ENCODE measurements at regions of chr14 and their contacts with region 1.

Region 1: DNA sequence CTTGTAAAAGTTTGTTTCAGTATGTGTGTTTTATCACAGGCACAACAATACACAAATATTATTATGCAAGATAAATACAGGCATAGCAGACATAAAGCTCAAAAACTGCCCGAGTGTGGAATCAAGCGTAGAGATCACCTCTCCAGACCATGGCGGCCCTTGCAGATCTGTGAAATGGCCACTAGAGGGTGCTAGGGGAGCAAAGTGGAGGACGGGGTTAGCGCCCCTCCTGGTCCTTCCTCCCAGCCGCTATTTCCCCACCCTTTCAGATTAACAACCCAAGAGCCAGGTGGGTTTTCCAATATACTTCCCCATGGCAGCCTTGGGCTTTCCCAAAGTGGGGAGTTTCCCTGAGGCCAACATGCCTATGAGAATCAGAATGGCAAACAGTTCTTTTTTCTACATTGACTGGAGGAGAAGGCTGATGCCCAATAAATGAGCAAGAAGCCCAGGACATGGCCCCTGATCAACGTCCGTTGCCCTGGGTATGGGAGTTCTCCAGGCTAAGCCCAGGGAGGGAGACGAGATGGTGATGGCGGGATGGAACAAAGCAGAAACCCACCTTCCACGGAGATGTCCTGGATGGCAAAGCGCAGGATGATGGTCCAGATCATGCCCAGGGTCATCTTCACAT is 67.4 kb downstream of the ACTN1 start:
- DNase-seq: peak; percentile 25 to 54
- ATAC-seq: peak; percentile 91 to 93
- H3K4me3 ChIP-seq: no peak overlapping the region
- H3K27ac ChIP-seq: no peak overlapping the region
- H3K4me1 ChIP-seq: peaks cover 0 to 7% of the 10 kb centered on the region in 2 donors
- H3K27me3 ChIP-seq: no peaks in the 10 kb centered on the region
- CTCF ChIP-seq: peak; percentile 89 to 98 (median 94)
- POLR2A ChIP-seq: no peak

Region 2: DNA sequence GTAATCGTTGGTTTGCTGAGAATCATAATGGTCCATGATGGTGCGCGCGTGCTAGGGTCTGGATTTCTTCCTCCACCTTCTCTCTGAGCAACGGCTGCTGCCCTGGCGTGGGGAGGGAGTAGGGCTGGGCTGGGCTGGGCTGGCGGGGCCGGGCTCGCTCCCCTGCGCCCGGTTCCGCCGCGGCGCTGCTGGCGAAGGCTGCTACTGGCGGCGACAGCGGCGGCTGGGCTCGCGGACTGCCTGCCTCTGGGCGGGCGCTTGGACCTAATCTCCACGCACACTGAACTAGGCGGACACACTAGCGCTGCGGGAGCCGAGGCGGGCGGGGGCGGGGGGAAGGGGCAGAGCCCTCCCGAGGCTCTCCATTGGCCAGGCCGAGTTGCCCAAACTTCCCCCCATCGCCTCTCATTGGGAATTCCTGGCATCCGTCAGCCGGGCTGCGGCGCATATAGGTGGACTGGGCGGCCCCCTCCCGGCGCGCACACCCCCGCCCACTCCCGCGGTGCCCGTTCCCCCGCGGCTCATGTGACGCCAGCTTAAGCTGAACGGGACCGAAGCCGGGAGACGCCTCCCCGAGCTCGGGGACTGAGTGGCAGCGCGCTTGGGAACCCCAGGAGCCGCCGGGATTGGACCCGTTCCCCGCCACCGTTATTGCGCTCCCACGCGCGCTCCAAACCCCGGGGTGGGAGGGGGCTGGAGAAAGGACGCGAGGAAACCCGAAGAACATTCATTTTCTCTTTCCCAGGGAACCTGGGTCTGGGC is 67.5 kb after region 1 on chr14 and contains the start of gene ACTN1:
- in situ Hi-C with region 1: no loop called
- intact Hi-C with region 1: loop called (anchors 2 kb)
- DNase-seq: peak; percentile 85 to 91
- ATAC-seq: peak; percentile 82 to 84
- H3K4me3 ChIP-seq: peak within 1 kb of the TSS; percentile 75 to 99 (median 88)
- H3K27ac ChIP-seq: peak within 1 kb of the TSS; percentile 79 to 89 (median 80)
- H3K4me1 ChIP-seq: no peaks in the 10 kb centered on the region
- H3K27me3 ChIP-seq: no peaks in the 10 kb centered on the region
- CTCF ChIP-seq: no peak
- POLR2A ChIP-seq: peak; percentile 65 to 86
- total RNA-seq, gene ACTN1: 10.0 to 17.3 (median 14.1) TPM

Region 3: DNA sequence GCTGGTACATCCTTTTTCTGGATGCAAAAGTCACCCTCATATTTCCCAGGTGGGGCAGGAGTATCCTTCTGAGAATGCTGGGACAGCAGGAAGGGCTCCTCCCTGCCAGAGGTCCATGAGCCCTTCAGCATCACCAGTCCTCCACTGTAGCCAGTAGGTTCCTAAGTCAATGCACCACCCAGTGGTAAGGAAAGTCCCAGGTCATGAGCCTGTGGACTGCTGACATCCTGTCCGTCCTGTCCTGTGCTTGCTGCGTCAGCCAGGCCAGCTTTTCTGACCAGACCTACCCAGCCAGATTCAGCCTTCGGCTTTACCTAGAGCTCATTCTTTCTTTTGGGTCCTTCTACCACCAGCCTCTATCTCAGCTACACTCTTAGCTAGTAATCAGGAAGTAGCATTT is 90.4 kb after region 1 on chr14:
- in situ Hi-C with region 1: no loop called
- intact Hi-C with region 1: loop called (anchors 1 kb)
- DNase-seq: no peak
- ATAC-seq: peak in 1 of 2 donors; percentile 66
- H3K4me3 ChIP-seq: no peak overlapping the region
- H3K27ac ChIP-seq: no peak overlapping the region
- H3K4me1 ChIP-seq: no peaks in the 10 kb centered on the region
- H3K27me3 ChIP-seq: no peaks in the 10 kb centered on the region
- CTCF ChIP-seq: peak in 2 of 5 experiments; percentile 30 to 36
- POLR2A ChIP-seq: no peak

Region 4: DNA sequence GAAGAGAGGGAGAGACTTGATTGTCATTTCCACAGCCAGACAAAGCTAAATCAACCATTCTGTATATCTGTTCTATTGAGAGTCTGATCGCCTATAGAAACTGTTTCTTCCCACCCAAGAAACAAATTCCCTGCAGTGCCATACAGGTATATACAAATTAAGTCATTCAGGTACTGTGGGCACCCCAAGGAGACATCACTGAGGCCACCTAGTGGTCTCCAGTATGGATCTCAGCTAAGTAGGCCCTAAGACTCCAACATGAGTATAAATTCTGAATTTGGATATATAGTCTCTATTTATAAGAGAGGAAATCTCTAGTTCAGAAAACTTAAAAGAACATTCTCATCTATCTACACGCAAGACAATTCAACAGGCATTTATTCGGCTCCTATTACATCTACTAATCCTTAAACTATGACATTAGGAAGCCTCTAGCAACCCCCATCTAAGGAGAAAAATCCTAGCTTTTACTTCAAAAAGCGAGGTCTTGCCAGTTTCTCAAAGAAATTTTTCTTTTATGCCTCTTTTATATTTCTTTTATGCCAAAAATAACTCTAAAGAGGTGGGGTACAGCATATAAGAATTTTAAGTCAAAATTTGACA is 178.6 kb after region 1 on chr14:
- in situ Hi-C with region 1: loop called in 2 of 4 experiments (anchors 5 kb)
- intact Hi-C with region 1: loop called (anchors 1 kb)
- DNase-seq: no peak
- ATAC-seq: no peak
- H3K4me3 ChIP-seq: no peak overlapping the region
- H3K27ac ChIP-seq: no peak overlapping the region
- H3K4me1 ChIP-seq: peaks cover 14 to 36% of the 10 kb centered on the region in 2 donors
- H3K27me3 ChIP-seq: no peaks in the 10 kb centered on the region
- CTCF ChIP-seq: peak; percentile 24 to 64 (median 44)
- POLR2A ChIP-seq: no peak

Region 5: DNA sequence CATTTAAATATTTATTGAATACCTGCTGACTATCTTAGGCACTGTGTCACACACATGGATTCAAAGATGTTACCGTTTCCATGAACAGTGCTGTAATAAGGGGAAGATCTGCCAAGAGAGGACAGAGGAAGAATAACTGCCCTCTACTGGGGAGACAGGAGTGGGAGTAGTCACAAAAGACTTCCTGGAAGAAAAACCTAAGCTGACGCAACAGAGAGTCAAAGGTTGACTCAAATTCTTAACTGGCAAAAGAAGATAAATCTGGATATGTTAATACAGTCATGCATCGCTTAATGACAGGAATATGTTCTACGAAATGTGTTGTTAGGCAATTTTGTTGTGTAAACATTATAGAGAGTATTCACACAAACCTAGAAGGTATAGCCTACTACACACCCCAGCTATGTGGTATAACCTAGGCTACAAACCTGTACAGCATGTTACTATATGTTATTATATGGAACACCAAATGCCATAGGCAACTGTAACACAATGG is 189.7 kb after region 1 on chr14:
- in situ Hi-C with region 1: loop called (anchors 5 kb)
- intact Hi-C with region 1: no loop called
- DNase-seq: no peak
- ATAC-seq: peak; percentile 78 to 82
- H3K4me3 ChIP-seq: no peak overlapping the region
- H3K27ac ChIP-seq: no peak overlapping the region
- H3K4me1 ChIP-seq: no peaks in the 10 kb centered on the region
- H3K27me3 ChIP-seq: no peaks in the 10 kb centered on the region
- CTCF ChIP-seq: peak in 3 of 5 experiments; percentile 38 to 48 (median 45)
- POLR2A ChIP-seq: no peak

Region 6: GRCh38 chr14:69107407-69108003 is 195.8 kb after region 1 on chr14:
- in situ Hi-C with region 1: loop called in 2 of 4 experiments (anchors 5 kb)
- intact Hi-C with region 1: loop called (anchors 1 kb)
- DNase-seq: no peak
- ATAC-seq: peak; percentile 63 to 71
- H3K4me3 ChIP-seq: no peak overlapping the region
- H3K27ac ChIP-seq: no peak overlapping the region
- H3K4me1 ChIP-seq: peaks cover 3 to 7% of the 10 kb centered on the region in 2 donors
- H3K27me3 ChIP-seq: no peaks in the 10 kb centered on the region
- CTCF ChIP-seq: peak; percentile 50 to 69 (median 65)
- POLR2A ChIP-seq: no peak

Measured in gastrocnemius medialis (tissue), 4 donors.